AG04449 (cell line): ENCODE measurements at regions of chr16 and their contacts with region 1.

Region 1: DNA sequence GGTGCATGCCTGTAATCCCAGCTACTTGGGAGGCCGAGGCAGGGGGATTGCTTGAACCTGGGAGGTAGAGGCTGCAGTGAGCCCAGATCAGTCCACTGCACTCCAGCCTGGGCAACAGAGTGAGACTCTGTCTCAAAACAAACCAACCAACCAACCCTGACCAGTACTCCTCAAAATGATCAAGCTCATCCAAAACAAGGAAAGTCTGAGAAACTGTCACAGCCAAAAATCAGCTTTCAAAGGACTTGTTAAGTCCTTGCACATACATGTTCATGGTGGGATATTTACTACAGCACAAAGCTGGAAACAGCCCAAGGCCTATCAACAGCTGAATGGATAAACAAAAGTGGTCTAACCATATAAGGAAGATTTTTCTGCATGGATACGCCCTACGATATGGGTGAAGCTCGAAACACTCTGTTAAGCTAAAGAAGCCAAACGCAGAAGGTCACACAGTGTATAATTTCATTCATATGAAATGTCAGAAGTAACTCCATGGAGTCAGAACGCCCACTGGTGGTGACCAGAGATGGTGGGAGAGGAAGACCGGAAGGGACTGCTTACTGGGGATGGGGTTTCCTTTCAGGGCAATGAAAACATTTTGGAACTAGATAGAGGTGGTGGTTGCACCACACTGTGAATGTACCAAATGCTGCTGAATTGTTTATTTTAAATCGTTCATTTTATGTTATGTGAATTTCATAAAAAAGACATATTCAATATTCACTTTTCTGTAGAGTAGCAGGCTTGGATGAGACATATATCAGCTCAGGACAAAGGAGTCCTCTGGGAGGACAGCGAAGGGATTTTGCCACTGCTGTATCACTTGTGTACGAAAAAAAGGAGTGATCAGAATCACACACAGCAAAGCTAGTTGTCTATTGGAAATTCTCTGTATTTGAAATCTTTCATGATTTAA is 17.7 kb downstream of the CCL17 start:
- DNase-seq: peak; percentile 5
- H3K4me3 ChIP-seq: no peak overlapping the region
- CTCF ChIP-seq: peak; percentile 73

Region 2: DNA sequence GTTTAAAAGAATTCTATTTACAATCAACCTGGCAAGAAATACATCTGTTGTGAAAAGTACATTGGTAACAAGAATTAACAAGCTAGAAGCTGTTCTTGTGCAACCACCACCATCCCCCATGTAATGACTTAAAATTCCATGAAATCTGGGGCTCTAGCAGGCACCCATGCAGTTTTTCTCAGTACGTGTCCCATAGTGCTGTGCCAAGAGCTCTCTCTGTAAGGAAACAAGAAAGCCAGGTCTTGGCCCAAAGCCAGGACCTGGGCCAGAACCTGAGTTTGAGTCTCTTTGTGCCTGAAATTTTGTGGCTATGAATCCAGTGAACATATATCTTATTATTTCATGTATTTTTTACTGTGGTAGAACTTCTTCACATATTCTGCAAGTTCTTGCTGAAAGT is 645.7 kb before region 1 on chr16:
- CTCF ChIA-PET with region 1: no interaction called
- POLR2A ChIA-PET with region 1: no interaction called
- DNase-seq: no peak
- H3K4me3 ChIP-seq: no peak overlapping the region
- CTCF ChIP-seq: no peak

Region 3: DNA sequence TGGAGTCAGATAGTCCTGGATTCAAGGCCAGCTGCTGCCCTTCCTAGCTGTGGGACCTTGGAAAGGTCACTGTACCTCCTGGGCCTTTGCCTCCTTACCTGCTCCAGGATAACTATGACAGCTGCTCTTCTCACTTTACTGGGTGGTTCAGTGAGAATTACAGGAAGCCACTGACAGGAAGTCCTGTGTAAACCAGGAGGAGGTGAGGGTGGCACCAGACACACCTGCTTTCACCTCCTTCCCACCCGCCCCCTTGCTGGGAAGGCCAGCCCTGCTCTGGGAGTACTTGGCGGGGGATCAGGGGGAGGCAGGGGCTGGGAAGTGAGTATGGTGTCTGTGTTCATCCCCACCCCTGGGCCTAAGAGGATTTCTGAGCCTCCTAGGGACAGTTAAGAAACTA is 287.3 kb before region 1 on chr16:
- CTCF ChIA-PET with region 1: no interaction called
- POLR2A ChIA-PET with region 1: no interaction called
- DNase-seq: no peak
- H3K4me3 ChIP-seq: no peak overlapping the region
- CTCF ChIP-seq: no peak

Region 4: GRCh38 chr16:57268804-57269800 is 153.2 kb before region 1 on chr16:
- CTCF ChIA-PET with region 1: no interaction called
- POLR2A ChIA-PET with region 1: no interaction called
- DNase-seq: no peak
- H3K4me3 ChIP-seq: no peak overlapping the region
- CTCF ChIP-seq: no peak

Region 5: DNA sequence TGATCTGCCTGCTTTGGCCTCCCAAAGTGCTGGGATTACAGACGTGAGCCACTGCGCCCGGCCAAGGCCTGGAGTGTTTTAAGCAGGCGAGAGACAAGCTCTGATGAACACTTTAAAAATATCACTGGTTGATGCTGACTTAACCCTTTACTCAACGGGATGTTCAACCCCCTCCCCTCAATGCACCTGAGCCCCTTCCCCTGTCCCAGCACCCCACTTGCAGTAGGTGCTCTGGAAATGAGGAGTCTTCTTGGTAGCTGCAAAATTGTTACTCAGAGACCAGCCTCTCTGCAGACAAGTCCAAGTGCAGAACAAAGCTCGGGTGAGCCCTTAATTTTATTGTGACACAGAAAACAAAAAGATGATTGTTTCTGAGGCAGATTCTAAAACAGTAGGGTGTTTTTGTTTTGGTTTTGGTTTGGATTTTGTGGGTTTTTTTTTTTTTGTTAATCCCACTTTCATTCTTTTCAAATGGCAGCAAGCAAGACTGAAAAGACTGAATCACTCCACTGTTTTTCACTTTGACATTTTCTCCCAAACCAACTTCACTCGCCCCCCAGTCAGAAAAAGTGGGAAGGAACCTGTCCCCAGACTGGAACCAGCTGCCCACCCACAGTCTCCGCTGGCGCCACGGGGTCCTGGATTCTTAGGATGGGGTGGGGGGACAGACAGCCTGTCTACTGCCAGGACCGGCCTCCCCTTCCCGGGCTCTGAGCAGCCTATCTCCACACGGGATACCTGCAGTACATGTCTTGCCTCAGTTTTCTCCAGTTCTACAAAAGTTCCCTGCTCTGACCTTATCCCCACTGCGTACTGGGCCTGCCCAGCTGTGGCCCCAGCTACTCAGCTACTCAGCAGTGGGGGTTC is 132.7 kb before region 1 on chr16:
- CTCF ChIA-PET with region 1: interaction called, 11 read pairs
- POLR2A ChIA-PET with region 1: no interaction called
- DNase-seq: no peak
- H3K4me3 ChIP-seq: no peak overlapping the region
- CTCF ChIP-seq: no peak

Region 6: GRCh38 chr16:57300387-57301125 is 121.7 kb before region 1 on chr16:
- CTCF ChIA-PET with region 1: interaction called, 923 read pairs
- POLR2A ChIA-PET with region 1: interaction called, 7 read pairs
- DNase-seq: peak; percentile 90
- H3K4me3 ChIP-seq: peak overlapping the region; percentile 64
- CTCF ChIP-seq: peak; percentile 95

Region 7: GRCh38 chr16:57386381-57386951 is 35.8 kb before region 1 on chr16:
- CTCF ChIA-PET with region 1: interaction called, 16 read pairs
- POLR2A ChIA-PET with region 1: no interaction called
- DNase-seq: peak; percentile 37
- H3K4me3 ChIP-seq: no peak overlapping the region
- CTCF ChIP-seq: no peak

Region 8: GRCh38 chr16:57432989-57433388 is 10.7 kb after region 1 on chr16:
- CTCF ChIA-PET with region 1: interaction called, 185 read pairs
- POLR2A ChIA-PET with region 1: no interaction called
- DNase-seq: no peak
- H3K4me3 ChIP-seq: no peak overlapping the region
- CTCF ChIP-seq: no peak

Region 9: DNA sequence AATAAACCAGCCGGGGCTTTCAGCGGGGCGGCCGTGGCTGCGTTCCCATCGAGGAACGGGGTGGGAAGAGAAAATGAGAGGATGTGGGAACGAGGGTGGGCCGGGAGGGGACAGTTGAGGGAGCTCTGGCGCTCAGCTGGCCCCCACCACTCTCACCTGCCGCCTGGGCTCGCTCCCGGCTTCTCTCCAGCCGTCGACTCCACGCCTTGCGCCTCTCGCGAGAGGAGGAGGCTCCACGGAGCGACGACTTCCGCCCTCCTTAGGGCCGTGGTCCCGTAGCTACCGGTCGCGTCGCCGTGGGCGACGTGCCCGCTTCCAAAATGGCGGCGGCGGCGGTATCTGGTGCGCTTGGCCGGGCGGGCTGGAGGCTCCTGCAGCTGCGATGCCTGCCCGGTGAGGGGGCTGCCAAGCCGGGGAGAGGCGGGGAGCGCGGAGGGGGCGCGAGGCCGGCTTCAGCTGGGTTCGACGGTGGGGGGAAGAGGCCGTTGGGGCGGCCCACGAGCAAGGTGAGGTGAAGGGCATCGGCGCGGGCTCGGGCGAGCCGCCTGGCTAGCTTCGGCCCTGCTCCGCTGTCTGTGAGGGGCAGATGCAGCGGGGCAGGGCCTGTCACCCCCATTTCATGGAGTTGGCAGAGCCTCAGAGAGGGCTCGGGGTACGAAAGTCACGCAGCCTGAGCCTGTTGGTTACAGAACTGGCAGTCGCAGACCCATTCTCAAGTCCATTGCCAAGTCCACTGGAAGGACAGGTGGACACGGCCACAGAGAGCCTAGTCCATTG is 25.1 kb after region 1 on chr16 and contains the starts of genes CIAPIN1 and COQ9:
- CTCF ChIA-PET with region 1: interaction called, 185 read pairs
- POLR2A ChIA-PET with region 1: no interaction called
- DNase-seq: peak; percentile 33
- H3K4me3 ChIP-seq: peak within 1 kb of the TSS; percentile 84
- CTCF ChIP-seq: no peak

Region 10: GRCh38 chr16:57462209-57462977 is 40.1 kb after region 1 on chr16 and contains the start of gene POLR2C:
- CTCF ChIA-PET with region 1: interaction called, 31 read pairs
- POLR2A ChIA-PET with region 1: no interaction called
- DNase-seq: peak; percentile 12
- H3K4me3 ChIP-seq: peak within 1 kb of the TSS; percentile 69
- CTCF ChIP-seq: peak; percentile 94